Activated CD4-positive, alpha-beta T cell treated with anti-CD3 and anti-CD28 coated beads, Interleukin-2, amount 10 ng/mL, durations not matched to agents 7 days and 5 days (primary cell): ENCODE measurements at regions of chrX and their contacts with region 1.

Region 1: GRCh38 chrX:19920970-19921369 is 33.6 kb upstream of the SH3KBP1 start:
- DNase-seq: no peak
- H3K4me3 Mint-ChIP-seq: no peak overlapping the region
- H3K27ac Mint-ChIP-seq: no peak overlapping the region
- H3K4me1 Mint-ChIP-seq: peaks cover 5% of the 10 kb centered on the region
- H3K27me3 Mint-ChIP-seq: no peaks in the 10 kb centered on the region

Region 2: DNA sequence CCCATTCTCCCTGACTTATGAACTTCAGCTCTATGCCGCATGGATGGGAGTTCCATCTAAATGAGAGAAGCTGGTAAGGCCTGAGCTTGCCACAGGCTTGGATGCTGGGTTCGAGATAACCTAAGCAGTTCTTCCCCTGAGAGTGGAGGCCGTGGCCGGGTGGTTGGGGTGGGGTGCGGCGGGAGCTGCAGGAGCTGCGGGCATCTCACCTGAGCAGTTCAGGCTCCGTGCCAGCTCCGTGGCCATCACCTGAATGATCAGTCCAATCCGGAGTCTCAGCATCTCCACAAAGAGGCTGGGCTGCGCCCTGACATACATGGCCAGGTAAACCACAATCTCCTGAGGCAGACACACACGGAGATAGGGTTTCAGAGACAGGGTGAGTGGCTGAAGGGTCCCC is 1014.7 kb before region 1 on chrX:
- CTCF ChIA-PET with region 1: no interaction called
- POLR2A ChIA-PET with region 1: interaction called, 12 read pairs
- DNase-seq: no peak
- H3K4me3 Mint-ChIP-seq: no peak overlapping the region
- H3K27ac Mint-ChIP-seq: no peak overlapping the region
- H3K4me1 Mint-ChIP-seq: no peaks in the 10 kb centered on the region
- H3K27me3 Mint-ChIP-seq: no peaks in the 10 kb centered on the region